ENCODE measurements at regions of chr4 and their contacts with region 1.

Region 1: GRCh38 chr4:173264684-173265185 is 69.4 kb downstream of the HMGB2 start:
- DNase-seq: no peak
- H3K4me3 ChIP-seq: no peak overlapping the region
- H3K27ac ChIP-seq: no peak overlapping the region
- H3K4me1 ChIP-seq: peaks cover 7% of the 10 kb centered on the region
- H3K27me3 ChIP-seq: no peaks in the 10 kb centered on the region
- CTCF ChIP-seq: no peak
- POLR2A ChIP-seq: no peak

Region 2: DNA sequence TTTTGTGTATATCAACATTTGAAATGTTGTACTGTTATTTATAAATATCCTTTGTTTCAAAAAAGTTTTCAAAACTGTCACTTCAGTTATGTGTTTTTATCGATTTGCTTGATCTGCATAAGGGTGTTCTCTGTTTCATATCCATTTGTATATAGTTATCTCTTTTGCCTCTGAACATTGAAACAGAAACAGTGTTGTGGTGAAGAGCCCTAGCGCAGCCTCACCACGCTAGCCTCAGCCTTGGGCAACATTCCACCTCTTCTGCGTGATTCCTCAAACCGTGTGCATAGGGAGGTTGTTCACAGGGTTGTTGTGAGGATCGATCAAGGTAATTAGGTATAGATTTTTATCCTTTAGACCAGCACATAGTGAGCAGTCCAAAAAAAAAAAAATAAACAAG is 383.1 kb before region 1 on chr4:
- intact Hi-C with region 1: no loop called
- DNase-seq: no peak
- H3K4me3 ChIP-seq: no peak overlapping the region
- H3K27ac ChIP-seq: no peak overlapping the region
- H3K4me1 ChIP-seq: no peaks in the 10 kb centered on the region
- H3K27me3 ChIP-seq: no peaks in the 10 kb centered on the region
- CTCF ChIP-seq: no peak
- POLR2A ChIP-seq: no peak

Region 3: DNA sequence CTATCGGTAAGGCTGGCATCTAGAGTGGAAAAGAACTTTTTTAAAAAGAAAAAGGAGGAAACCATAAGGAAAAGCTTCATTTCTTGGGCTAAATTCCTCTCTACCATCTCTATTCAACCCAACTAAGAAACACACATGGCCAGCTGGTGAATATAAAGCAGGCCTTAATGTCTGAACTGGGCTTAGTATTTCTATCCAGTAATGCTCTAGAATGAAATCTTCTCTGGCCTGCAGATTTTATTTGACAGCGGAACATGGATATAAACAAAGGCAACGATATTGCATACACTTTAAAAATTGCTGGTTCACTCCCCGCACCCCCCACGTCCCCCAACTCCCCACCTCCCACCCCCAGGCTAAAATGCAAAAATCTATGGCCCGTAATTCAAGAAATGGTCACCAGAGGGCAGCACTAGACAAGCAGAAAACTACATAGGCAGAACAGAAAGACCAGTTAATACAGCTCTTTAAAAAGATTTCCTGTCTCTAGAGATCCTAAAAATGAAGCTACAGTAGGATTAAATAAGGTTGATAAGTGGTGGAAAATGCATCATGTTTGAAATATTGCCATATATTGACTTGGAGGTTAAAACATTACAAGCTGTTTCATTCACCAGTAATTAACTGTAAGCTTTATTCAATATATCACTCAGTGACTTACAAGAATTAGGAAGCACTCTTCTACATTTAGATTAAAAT is 251.4 kb before region 1 on chr4:
- intact Hi-C with region 1: loop called (anchors 5 kb)
- DNase-seq: no peak
- H3K4me3 ChIP-seq: no peak overlapping the region
- H3K27ac ChIP-seq: no peak overlapping the region
- H3K4me1 ChIP-seq: no peaks in the 10 kb centered on the region
- H3K27me3 ChIP-seq: no peaks in the 10 kb centered on the region
- CTCF ChIP-seq: peak in 2 of 3 experiments; percentile 60 to 85
- POLR2A ChIP-seq: no peak

Measured in vagina (tissue), 2 donors.